ENCODE measurements at regions of chr1 and their contacts with region 1.

Region 1: GRCh38 chr1:179882243-179883039 is at the start of gene TOR1AIP1:
- DNase-seq: peak; percentile 100
- ATAC-seq: peak; percentile 75
- H3K4me3 ChIP-seq: peak within 1 kb of the TSS; percentile 78 to 99 (median 96)
- H3K4me3 Mint-ChIP-seq: peak within 1 kb of the TSS; percentile 99
- H3K27ac ChIP-seq: peak within 1 kb of the TSS; percentile 99 to 100
- H3K27ac Mint-ChIP-seq: peak within 1 kb of the TSS; percentile 100
- H3K4me1 ChIP-seq: peaks cover 20 to 40% of the 10 kb centered on the region in 2 donors
- H3K4me1 Mint-ChIP-seq: peaks cover 53% of the 10 kb centered on the region
- H3K27me3 ChIP-seq: no peaks in the 10 kb centered on the region
- H3K27me3 Mint-ChIP-seq: no peaks in the 10 kb centered on the region
- CTCF ChIP-seq: peak; percentile 59
- total RNA-seq, gene TOR1AIP1: 43.3 and 50.0 TPM in 2 replicates

Region 2: GRCh38 chr1:178898401-178898800 is 984.0 kb before region 1 on chr1:
- CTCF ChIA-PET with region 1: no interaction called
- POLR2A ChIA-PET with region 1: no interaction called
- intact Hi-C with region 1: loop called (anchors 10 kb)
- DNase-seq: no peak
- ATAC-seq: no peak
- H3K4me3 ChIP-seq: no peak overlapping the region
- H3K4me3 Mint-ChIP-seq: no peak overlapping the region
- H3K27ac ChIP-seq: no peak overlapping the region
- H3K27ac Mint-ChIP-seq: peak overlapping the region; percentile 27
- H3K4me1 ChIP-seq: no peaks in the 10 kb centered on the region
- H3K4me1 Mint-ChIP-seq: peaks cover 18% of the 10 kb centered on the region
- H3K27me3 ChIP-seq: no peaks in the 10 kb centered on the region
- H3K27me3 Mint-ChIP-seq: no peaks in the 10 kb centered on the region
- CTCF ChIP-seq: no peak

Region 3: DNA sequence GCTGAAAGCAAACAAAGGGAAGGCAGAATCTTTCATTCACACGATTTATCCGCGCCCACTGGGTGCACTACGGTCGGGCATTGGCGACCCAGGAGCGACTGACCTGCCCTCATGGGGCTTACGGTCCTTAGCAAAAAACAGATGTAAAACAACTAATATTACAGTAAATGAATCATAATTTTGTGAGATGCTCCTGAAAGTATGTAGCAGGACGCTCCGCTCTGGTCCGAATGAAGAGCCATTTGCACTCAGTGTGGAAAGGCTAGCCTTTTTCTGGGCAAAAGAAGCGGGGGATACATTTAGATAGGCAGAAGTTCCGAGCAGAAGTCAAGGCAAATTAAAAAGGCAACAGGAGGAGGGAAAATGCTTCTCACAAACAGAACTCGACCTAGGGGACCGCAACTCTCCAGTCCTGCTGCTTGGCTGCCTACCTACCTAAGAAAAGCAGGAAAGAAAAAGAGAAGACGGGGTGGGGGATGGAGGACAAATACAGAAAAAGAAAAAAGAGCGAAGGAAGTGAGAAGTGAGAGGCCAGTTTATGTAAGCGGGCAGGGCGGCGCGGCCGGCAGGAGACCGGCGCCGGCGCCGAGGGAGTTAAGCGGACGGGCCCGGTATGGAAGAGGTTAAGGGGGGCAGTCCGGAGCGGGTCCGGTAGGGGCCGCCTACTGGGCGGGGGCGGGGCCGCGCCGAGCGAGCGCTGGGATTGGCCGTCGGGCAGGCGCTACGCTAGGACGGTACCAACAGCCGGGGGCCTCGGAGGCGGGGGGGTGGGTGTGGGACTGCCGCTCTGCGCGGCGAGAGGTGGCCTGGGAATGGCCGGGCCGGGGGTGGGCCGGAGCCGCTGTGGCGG is 857.1 kb before region 1 on chr1 and contains the start of gene FAM20B:
- CTCF ChIA-PET with region 1: no interaction called
- POLR2A ChIA-PET with region 1: no interaction called
- intact Hi-C with region 1: loop called (anchors 2 kb)
- DNase-seq: peak; percentile 95
- ATAC-seq: peak; percentile 80
- H3K4me3 ChIP-seq: peak within 1 kb of the TSS; percentile 77 to 97 (median 87)
- H3K4me3 Mint-ChIP-seq: peak within 1 kb of the TSS; percentile 97
- H3K27ac ChIP-seq: peak within 1 kb of the TSS; percentile 92 to 95
- H3K27ac Mint-ChIP-seq: peak within 1 kb of the TSS; percentile 95
- H3K4me1 ChIP-seq: peaks cover 29 to 36% of the 10 kb centered on the region in 2 donors
- H3K4me1 Mint-ChIP-seq: peaks cover 45% of the 10 kb centered on the region
- H3K27me3 ChIP-seq: no peaks in the 10 kb centered on the region
- H3K27me3 Mint-ChIP-seq: no peaks in the 10 kb centered on the region
- CTCF ChIP-seq: no peak
- total RNA-seq, gene FAM20B: 28.5 and 32.8 TPM in 2 replicates

Region 4: DNA sequence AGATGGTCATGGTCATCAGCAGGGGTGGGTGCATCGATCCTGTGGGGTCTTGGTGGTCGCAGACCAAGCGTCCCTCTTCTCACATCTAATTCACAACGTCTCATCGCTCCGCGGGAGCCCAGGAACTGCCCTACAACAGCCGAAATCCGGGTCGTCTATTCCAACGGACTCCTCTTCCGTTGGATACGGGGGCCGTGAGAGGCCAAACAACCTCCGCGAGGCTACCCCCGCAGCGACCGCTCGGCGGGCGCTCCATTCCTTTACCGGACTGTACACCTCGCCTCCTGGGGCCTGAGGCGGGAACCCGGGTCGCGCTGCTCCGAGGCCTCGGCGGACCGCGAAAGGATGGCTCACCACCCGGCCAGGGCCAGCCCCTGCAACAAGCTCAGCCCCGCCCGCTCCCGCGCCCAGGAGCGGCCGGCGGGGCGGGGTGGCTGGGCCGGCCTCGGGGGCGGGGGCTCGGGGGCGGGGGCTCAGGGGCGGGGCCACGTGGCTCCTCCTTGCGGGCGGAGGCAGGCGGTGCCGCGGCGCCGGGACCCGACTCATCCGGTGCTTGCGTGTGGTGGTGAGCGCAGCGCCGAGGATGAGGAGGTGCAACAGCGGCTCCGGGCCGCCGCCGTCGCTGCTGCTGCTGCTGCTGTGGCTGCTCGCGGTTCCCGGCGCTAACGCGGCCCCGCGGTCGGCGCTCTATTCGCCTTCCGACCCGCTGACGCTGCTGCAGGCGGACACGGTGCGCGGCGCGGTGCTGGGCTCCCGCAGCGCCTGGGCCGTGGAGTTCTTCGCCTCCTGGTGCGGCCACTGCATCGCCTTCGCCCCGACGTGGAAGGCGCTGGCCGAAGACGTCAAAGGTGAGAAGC is 272.1 kb after region 1 on chr1 and contains the start of gene QSOX1:
- CTCF ChIA-PET with region 1: no interaction called
- POLR2A ChIA-PET with region 1: interaction called, 18 read pairs
- intact Hi-C with region 1: loop called (anchors 1 kb)
- DNase-seq: peak; percentile 91
- ATAC-seq: peak; percentile 96
- H3K4me3 ChIP-seq: peak within 1 kb of the TSS; percentile 58 to 89 (median 84)
- H3K4me3 Mint-ChIP-seq: peak within 1 kb of the TSS; percentile 96
- H3K27ac ChIP-seq: peak within 1 kb of the TSS; percentile 21 to 65
- H3K27ac Mint-ChIP-seq: peak within 1 kb of the TSS; percentile 86
- H3K4me1 ChIP-seq: peaks cover 22 to 25% of the 10 kb centered on the region in 2 donors
- H3K4me1 Mint-ChIP-seq: peaks cover 26% of the 10 kb centered on the region
- H3K27me3 ChIP-seq: no peaks in the 10 kb centered on the region
- H3K27me3 Mint-ChIP-seq: no peaks in the 10 kb centered on the region
- CTCF ChIP-seq: peak; percentile 9
- total RNA-seq, gene QSOX1: 16.9 and 20.6 TPM in 2 replicates

Region 5: GRCh38 chr1:180343931-180344769 is 461.7 kb after region 1 on chr1:
- CTCF ChIA-PET with region 1: no interaction called
- POLR2A ChIA-PET with region 1: no interaction called
- intact Hi-C with region 1: no loop called
- DNase-seq: no peak
- ATAC-seq: no peak
- H3K4me3 ChIP-seq: no peak overlapping the region
- H3K4me3 Mint-ChIP-seq: no peak overlapping the region
- H3K27ac ChIP-seq: no peak overlapping the region
- H3K27ac Mint-ChIP-seq: no peak overlapping the region
- H3K4me1 ChIP-seq: no peaks in the 10 kb centered on the region
- H3K4me1 Mint-ChIP-seq: peaks cover 9% of the 10 kb centered on the region
- H3K27me3 ChIP-seq: no peaks in the 10 kb centered on the region
- H3K27me3 Mint-ChIP-seq: no peaks in the 10 kb centered on the region
- CTCF ChIP-seq: no peak

Region 6: GRCh38 chr1:180502360-180503273 is 620.2 kb after region 1 on chr1 and contains the start of gene ACBD6:
- CTCF ChIA-PET with region 1: no interaction called
- POLR2A ChIA-PET with region 1: interaction called, 3 read pairs
- intact Hi-C with region 1: loop called (anchors 1 kb)
- DNase-seq: peak; percentile 92
- ATAC-seq: peak; percentile 82
- H3K4me3 ChIP-seq: peak within 1 kb of the TSS; percentile 69 to 97 (median 84)
- H3K4me3 Mint-ChIP-seq: peak within 1 kb of the TSS; percentile 95
- H3K27ac ChIP-seq: peak within 1 kb of the TSS; percentile 74 to 87
- H3K27ac Mint-ChIP-seq: peak within 1 kb of the TSS; percentile 98
- H3K4me1 ChIP-seq: peaks cover 13 to 19% of the 10 kb centered on the region in 2 donors
- H3K4me1 Mint-ChIP-seq: peaks cover 32% of the 10 kb centered on the region
- H3K27me3 ChIP-seq: no peaks in the 10 kb centered on the region
- H3K27me3 Mint-ChIP-seq: no peaks in the 10 kb centered on the region
- CTCF ChIP-seq: no peak
- total RNA-seq, gene ACBD6: 80.9 and 82.8 TPM in 2 replicates